Dorsolateral prefrontal cortex (tissue), 120 donors: ENCODE measurements at regions of chr18 and their contacts with region 1.

Region 1: DNA sequence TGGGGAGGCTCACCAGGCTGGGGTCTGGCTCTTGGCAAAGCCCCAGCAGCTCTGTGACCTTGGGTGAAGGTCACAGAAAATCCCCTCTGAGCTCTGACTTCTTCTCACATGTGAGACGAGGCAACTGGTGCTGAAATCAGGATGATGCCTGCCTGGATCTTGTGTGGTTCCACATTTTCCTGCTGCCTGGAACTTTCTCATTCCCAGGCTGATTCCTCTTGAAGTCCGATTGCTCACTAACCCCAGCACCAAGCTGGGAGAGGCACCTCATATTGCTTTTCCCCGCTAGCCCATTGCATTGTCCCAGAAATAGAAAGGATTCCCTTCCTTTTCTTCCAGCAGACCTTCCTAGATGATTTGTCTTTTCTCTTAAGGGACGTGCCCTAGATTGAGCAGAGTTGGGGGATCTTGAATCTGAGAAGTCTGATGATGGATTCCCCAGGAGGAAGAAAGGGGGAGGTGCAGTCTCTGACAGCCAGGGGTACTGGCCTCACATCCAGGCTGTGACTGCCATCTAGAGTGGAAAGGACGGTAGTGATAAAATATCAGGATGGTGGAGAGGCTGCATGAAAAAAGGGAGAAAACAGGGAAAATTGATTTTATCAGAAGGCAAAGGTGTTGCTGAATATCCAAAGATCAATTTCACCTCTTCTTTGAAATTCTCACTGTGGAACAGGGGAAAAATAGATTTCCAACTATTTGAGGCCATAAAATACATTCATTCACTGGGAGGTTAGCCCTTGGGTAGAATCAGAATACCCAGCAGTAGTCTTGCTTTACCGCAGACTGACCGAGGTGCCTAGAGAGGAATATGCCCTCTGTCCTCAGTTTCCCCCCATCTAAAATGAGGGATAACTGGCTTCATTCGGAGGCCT is 96.3 kb downstream of the FAM210A start:
- DNase-seq: peak in 6 of 10 donors; percentile 68 to 83 (median 74)
- H3K4me3 ChIP-seq: peak overlapping the region in 31 of 59 donors; percentile 5 to 36 (median 19)
- H3K27ac ChIP-seq: peak overlapping the region; percentile 49 to 99 (median 91)
- H3K27me3 ChIP-seq: no peaks in the 10 kb centered on the region
- CTCF ChIP-seq: peak; percentile 63 to 97 (median 92)

Region 2: GRCh38 chr18:12990967-12991838 is 638.9 kb before region 1 on chr18 and contains the start of gene CEP192:
- intact Hi-C with region 1: loop called in 1 of 2 experiments (anchors 5 kb)
- DNase-seq: peak; percentile 93 to 99 (median 98)
- H3K4me3 ChIP-seq: peak within 1 kb of the TSS; percentile 75 to 100 (median 92)
- H3K27ac ChIP-seq: peak within 1 kb of the TSS in 57 of 59 donors; percentile 41 to 94 (median 84)
- H3K27me3 ChIP-seq: no peaks in the 10 kb centered on the region
- CTCF ChIP-seq: peak in 46 of 56 donors; percentile 5 to 62 (median 38)
- total RNA-seq, gene CEP192: 31.3 to 63.5 (median 47.2) TPM

Region 3: GRCh38 chr18:13221869-13222855 is 407.9 kb before region 1 on chr18:
- intact Hi-C with region 1: loop called (anchors 2 to 5 kb)
- DNase-seq: peak in 5 of 10 donors; percentile 51 to 71 (median 56)
- H3K4me3 ChIP-seq: peak overlapping the region in 57 of 59 donors; percentile 5 to 92 (median 31)
- H3K27ac ChIP-seq: peak overlapping the region in 56 of 59 donors; percentile 2 to 89 (median 68)
- H3K27me3 ChIP-seq: no peaks in the 10 kb centered on the region
- CTCF ChIP-seq: peak in 3 of 56 donors; percentile 8 to 11 (median 9)

Region 4: DNA sequence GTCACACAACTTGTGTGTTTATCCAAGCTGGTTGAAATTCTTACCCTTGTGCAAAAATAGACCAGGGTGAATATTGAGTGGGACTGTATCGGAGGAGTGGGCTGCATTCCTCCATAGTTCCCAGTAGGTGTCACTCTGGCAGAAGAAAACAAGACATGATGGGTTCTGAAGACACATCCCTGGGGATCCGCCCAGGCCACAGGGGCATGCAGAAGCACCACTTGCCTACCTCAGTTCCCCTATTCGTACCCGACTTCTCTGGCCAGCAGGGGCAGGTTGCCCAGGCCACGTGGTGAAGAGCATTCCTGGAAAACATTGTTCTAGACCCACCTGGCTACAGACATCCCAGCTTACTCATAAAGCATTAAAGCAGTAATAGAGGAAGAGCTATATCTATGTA is 72.0 kb before region 1 on chr18:
- intact Hi-C with region 1: loop called in 1 of 2 experiments (anchors 2 kb)
- DNase-seq: peak in 5 of 10 donors; percentile 56 to 72 (median 69)
- H3K4me3 ChIP-seq: peak overlapping the region in 3 of 59 donors; percentile 7 to 35 (median 10)
- H3K27ac ChIP-seq: peak overlapping the region in 54 of 59 donors; percentile 8 to 100 (median 86)
- H3K27me3 ChIP-seq: no peaks in the 10 kb centered on the region
- CTCF ChIP-seq: peak; percentile 52 to 90 (median 78)